ENCODE measurements at regions of chr1 and their contacts with region 1.

Region 1: GRCh38 chr1:26145041-26145959 is 13.6 kb upstream of the FAM110D start:
- DNase-seq: peak; percentile 80
- ATAC-seq: peak; percentile 94
- H3K4me3 ChIP-seq: no peak overlapping the region
- H3K27ac ChIP-seq: no peak overlapping the region
- H3K4me1 ChIP-seq: peaks cover 9% of the 10 kb centered on the region; the same call in 1 of the 2 replicates
- H3K27me3 ChIP-seq: peaks cover 0 to 7% of the 10 kb centered on the region in 2 experiments; a peak in 4 of 5 replicates
- CTCF ChIP-seq: peak; percentile 87
- EP300 ChIP-seq: no peak
- POLR2A ChIP-seq: no peak
- RAD21 ChIP-seq: peak; percentile 83

Region 2: DNA sequence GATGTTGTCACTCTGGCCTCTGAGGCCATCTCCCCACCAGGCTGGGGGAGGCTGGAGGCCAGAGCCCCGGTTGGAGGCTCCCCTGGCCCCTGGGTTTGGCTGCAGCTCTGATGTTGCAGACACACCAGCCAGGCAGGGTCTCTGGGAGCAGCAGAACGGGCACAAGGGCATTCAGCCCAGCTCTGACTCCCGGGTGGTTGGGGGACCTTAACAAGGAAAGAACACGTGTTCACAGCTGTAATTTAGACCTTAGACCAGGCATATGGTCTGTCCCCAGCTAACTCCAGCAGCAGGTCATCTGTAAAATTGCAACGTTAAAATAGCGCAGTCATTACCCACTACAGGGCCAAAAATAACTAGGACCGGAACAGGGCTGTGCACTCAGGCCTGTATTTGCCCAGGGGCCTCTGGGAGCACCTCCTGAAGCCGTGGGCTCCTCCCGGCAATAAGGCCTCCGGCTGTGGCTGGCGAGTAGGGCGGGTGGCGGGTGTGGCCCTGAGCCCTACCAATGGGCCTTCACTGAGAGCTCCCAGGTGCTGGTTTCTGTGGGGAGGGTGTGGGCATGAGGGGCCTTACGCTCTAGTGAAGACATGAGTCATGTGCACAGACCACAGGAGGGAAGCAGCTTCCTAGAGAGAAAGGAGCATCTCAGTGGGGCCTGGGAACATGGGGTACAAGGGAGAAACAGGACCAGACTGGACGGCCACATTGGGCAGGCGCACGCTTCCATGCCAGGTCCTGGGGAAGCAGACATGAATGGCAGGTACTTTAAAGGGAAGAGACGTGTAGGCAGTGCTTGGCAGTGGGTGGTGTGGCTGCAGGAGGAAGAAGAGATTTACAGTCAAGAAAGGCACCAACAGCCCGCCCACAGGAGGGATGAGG is 595.8 kb before region 1 on chr1:
- CTCF ChIA-PET with region 1: no interaction called
- POLR2A ChIA-PET with region 1: no interaction called
- in situ Hi-C with region 1: no loop called
- intact Hi-C with region 1: no loop called
- DNase-seq: peak; percentile 53
- ATAC-seq: peak; percentile 64
- H3K4me3 ChIP-seq: peak overlapping the region in 1 of 3 experiments; percentile 42; a peak in 2 of 6 replicates
- H3K27ac ChIP-seq: peak overlapping the region; percentile 65
- H3K4me1 ChIP-seq: peaks cover 74% of the 10 kb centered on the region
- H3K27me3 ChIP-seq: no peaks in the 10 kb centered on the region
- CTCF ChIP-seq: no peak
- EP300 ChIP-seq: no peak
- POLR2A ChIP-seq: no peak
- RAD21 ChIP-seq: no peak

Region 3: GRCh38 chr1:26102526-26102925 is 42.8 kb before region 1 on chr1:
- CTCF ChIA-PET with region 1: interaction called, 66 read pairs
- POLR2A ChIA-PET with region 1: interaction called, 3 read pairs
- in situ Hi-C with region 1: loop called (anchors 10 kb)
- intact Hi-C with region 1: loop called (anchors 1 kb)
- DNase-seq: no peak
- ATAC-seq: no peak
- H3K4me3 ChIP-seq: no peak overlapping the region
- H3K27ac ChIP-seq: no peak overlapping the region
- H3K4me1 ChIP-seq: peaks cover 8% of the 10 kb centered on the region; the same call in 1 of the 2 replicates
- H3K27me3 ChIP-seq: peaks cover 0 to 18% of the 10 kb centered on the region in 2 experiments; a peak in 1 of 5 replicates
- CTCF ChIP-seq: no peak
- EP300 ChIP-seq: no peak
- POLR2A ChIP-seq: no peak
- RAD21 ChIP-seq: no peak

Region 4: DNA sequence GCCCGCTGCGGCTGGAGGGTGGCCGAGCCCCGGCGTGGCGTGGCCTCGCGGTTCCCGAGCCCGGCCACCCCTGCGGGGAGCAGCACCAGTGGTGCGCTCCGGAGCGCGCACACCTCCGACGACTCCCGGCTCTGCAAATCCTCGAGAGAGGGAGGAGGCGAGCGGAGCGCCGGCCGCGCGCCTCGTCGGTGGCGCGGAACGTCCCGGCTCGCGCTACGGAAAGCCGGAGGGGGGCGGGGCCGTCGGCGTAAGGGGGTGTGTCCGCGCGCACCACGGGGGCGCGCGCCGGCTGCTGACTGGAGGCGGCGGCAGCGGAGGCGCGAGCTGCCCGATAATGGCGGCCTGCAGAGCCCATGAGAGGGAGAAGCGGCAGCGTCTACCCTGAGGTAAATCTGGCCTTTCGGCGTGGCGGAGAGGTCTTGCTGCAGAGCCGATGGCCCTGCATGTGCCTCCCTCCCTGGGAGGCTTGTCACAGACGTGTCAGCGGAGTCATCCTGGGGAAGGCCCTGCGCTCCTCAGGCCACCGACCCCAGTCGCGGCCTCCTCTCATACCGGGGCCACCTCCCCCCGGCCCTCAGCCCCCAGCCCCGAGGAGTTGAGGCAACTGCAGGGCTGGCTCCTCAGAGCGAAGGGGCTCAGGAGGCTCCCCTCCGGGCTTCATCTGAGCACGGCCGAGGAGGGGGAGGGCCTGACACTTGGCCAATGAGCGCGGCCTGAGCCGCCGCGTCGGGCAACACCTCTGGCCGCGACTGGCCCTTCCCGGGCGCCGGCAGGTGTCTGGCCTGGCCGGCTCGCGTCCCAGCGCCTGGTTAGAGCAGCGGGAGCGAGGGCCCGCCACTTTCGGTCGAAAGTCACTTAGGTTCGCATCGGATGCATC is 33.5 kb before region 1 on chr1 and contains the start of gene PDIK1L:
- CTCF ChIA-PET with region 1: interaction called, 66 read pairs
- POLR2A ChIA-PET with region 1: interaction called, 3 read pairs
- in situ Hi-C with region 1: loop called (anchors 10 kb)
- intact Hi-C with region 1: no loop called
- DNase-seq: peak; percentile 84
- ATAC-seq: peak; percentile 93
- H3K4me3 ChIP-seq: peak within 1 kb of the TSS; percentile 73 to 98 (median 87)
- H3K27ac ChIP-seq: peak within 1 kb of the TSS; percentile 93
- H3K4me1 ChIP-seq: peaks cover 32% of the 10 kb centered on the region
- H3K27me3 ChIP-seq: no peaks in the 10 kb centered on the region; a peak in 1 of 5 replicates
- CTCF ChIP-seq: no peak
- EP300 ChIP-seq: no peak
- POLR2A ChIP-seq: peak; percentile 76
- RAD21 ChIP-seq: no peak; the same call in 1 of the 2 replicates
- total RNA-seq, gene PDIK1L: 4.6 and 5.8 TPM in 2 replicates

Region 5: GRCh38 chr1:26275580-26276431 is 130.5 kb after region 1 on chr1:
- CTCF ChIA-PET with region 1: no interaction called
- POLR2A ChIA-PET with region 1: no interaction called
- in situ Hi-C with region 1: no loop called
- intact Hi-C with region 1: no loop called
- DNase-seq: peak; percentile 59
- ATAC-seq: peak; percentile 29; the same call in 2 of the 3 replicates
- H3K4me3 ChIP-seq: no peak overlapping the region
- H3K27ac ChIP-seq: peak overlapping the region; percentile 11
- H3K4me1 ChIP-seq: peaks cover 34% of the 10 kb centered on the region
- H3K27me3 ChIP-seq: no peaks in the 10 kb centered on the region
- CTCF ChIP-seq: peak; percentile 89
- EP300 ChIP-seq: no peak
- POLR2A ChIP-seq: no peak
- RAD21 ChIP-seq: peak; percentile 52; the same call in 1 of the 2 replicates

Region 6: DNA sequence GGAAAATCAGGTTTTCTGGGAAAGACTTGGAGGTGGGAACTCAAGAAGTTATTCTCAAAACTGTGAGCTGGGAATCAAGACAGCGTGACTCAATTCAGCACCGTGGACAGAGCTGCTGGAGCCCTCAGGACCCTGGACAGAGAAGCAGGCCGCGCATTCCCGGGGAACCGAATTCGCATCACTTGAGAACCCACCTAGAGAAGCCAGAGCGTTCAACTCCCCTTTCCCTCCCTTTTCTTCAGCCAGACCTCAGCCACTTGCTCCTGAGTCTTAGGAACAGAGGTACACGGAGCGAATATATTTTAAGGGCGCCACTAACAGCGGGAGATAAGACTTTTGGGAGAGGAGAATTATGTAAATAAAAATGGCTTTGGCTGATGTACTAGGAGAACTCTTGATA is 263.3 kb after region 1 on chr1:
- CTCF ChIA-PET with region 1: no interaction called
- POLR2A ChIA-PET with region 1: no interaction called
- in situ Hi-C with region 1: no loop called
- intact Hi-C with region 1: no loop called
- DNase-seq: peak; percentile 46
- ATAC-seq: peak; percentile 78
- H3K4me3 ChIP-seq: no peak overlapping the region
- H3K27ac ChIP-seq: no peak overlapping the region
- H3K4me1 ChIP-seq: peaks cover 17% of the 10 kb centered on the region
- H3K27me3 ChIP-seq: peaks cover 7 to 32% of the 10 kb centered on the region in 2 experiments; a peak in 4 of 5 replicates
- CTCF ChIP-seq: 0 out of 2 replicates have a peak, but pooled peaks have one; percentile 6
- EP300 ChIP-seq: no peak
- POLR2A ChIP-seq: no peak
- RAD21 ChIP-seq: peak; percentile 29; the same call in 1 of the 2 replicates